GM12878 (cell line): ENCODE measurements at regions of chr21 and their contacts with region 1.

Region 1: DNA sequence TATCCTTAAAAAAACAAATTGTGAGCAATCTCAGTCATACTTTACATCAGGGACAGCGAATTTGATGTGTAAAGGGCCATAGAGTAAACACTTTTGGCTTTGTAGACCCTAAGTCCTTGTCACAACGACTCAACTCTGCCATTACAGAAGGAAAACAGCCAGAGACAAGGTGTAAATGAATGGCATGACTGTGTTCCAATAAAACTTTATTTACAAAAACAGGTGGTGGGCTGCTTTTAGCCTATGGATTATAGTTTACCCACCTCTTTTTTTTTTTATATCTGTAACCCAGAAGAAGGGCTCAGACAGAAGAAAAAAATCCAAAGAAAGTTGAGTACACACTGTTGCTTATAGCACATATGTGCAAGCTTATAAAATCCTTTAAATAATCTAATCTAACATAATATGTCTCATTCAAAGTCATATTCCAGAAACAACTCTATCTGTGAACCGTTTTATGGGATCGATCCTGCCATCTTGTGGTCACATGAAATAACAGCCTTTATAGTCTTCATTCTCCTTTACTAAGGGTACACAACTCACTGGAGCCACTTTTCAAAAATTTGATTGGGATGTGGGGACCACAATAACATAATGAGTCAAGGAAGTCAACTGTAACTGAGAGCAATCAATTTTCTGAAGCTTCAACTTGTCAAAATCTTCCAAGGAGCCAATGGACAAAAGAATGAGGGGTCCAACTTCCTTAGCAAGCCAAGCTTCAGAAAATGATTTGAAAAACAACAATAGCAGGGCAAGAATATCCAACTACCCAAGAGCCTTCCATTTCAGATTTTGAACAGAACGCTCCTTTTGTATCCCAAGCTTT is 142.2 kb upstream of the KRTAP19-8 start:
- DNase-seq: no peak
- ATAC-seq: peak; percentile 65
- H3K4me3 ChIP-seq: no peak overlapping the region
- H3K27ac ChIP-seq: no peak overlapping the region
- H3K4me1 ChIP-seq: no peaks in the 10 kb centered on the region
- H3K27me3 ChIP-seq: no peaks in the 10 kb centered on the region
- CTCF ChIP-seq: peak; percentile 21 to 52 (median 43); a peak in 5 of 6 replicates
- EP300 ChIP-seq: no peak
- POLR2A ChIP-seq: no peak
- RAD21 ChIP-seq: peak; percentile 41; the same call in 1 of the 2 replicates

Region 2: GRCh38 chr21:31098576-31099005 is 81.9 kb before region 1 on chr21:
- CTCF ChIA-PET with region 1: interaction called, 42 read pairs
- POLR2A ChIA-PET with region 1: interaction called, 4 read pairs
- RAD21 ChIA-PET with region 1: interaction called, 8 read pairs
- SMC1A ChIA-PET with region 1: interaction called, 15 read pairs
- in situ Hi-C with region 1: loop called (anchors 5 kb)
- intact Hi-C with region 1: loop called (anchors 1 kb)
- DNase-seq: no peak
- ATAC-seq: peak; percentile 91
- H3K4me3 ChIP-seq: no peak overlapping the region
- H3K27ac ChIP-seq: no peak overlapping the region
- H3K4me1 ChIP-seq: 0 out of 2 replicates have a peak, but pooled peaks cover 2% of the 10 kb centered on the region
- H3K27me3 ChIP-seq: no peaks in the 10 kb centered on the region
- CTCF ChIP-seq: peak; percentile 80 to 88 (median 80)
- EP300 ChIP-seq: no peak
- POLR2A ChIP-seq: no peak
- RAD21 ChIP-seq: peak; percentile 86

Region 3: GRCh38 chr21:31107871-31108270 is 72.6 kb before region 1 on chr21:
- CTCF ChIA-PET with region 1: interaction called, 76 read pairs
- POLR2A ChIA-PET with region 1: no interaction called
- RAD21 ChIA-PET with region 1: interaction called, 3 read pairs
- SMC1A ChIA-PET with region 1: interaction called, 40 read pairs
- in situ Hi-C with region 1: no loop called
- intact Hi-C with region 1: loop called (anchors 2 kb)
- DNase-seq: no peak
- ATAC-seq: peak; percentile 70
- H3K4me3 ChIP-seq: no peak overlapping the region
- H3K27ac ChIP-seq: no peak overlapping the region
- H3K4me1 ChIP-seq: peaks cover 11% of the 10 kb centered on the region; the same call in 1 of the 2 replicates
- H3K27me3 ChIP-seq: no peaks in the 10 kb centered on the region
- CTCF ChIP-seq: no peak
- EP300 ChIP-seq: no peak
- POLR2A ChIP-seq: no peak
- RAD21 ChIP-seq: no peak

Region 4: GRCh38 chr21:31132574-31133242 is 47.8 kb before region 1 on chr21:
- CTCF ChIA-PET with region 1: interaction called, 6 read pairs
- POLR2A ChIA-PET with region 1: no interaction called
- RAD21 ChIA-PET with region 1: no interaction called
- SMC1A ChIA-PET with region 1: interaction called, 3 read pairs
- in situ Hi-C with region 1: no loop called
- intact Hi-C with region 1: loop called (anchors 1 kb)
- DNase-seq: peak; percentile 93
- ATAC-seq: peak; percentile 85
- H3K4me3 ChIP-seq: no peak overlapping the region
- H3K27ac ChIP-seq: no peak overlapping the region
- H3K4me1 ChIP-seq: peaks cover 15% of the 10 kb centered on the region
- H3K27me3 ChIP-seq: no peaks in the 10 kb centered on the region
- CTCF ChIP-seq: no peak
- EP300 ChIP-seq: peak; percentile 23 to 82; a peak in 3 of 4 replicates
- POLR2A ChIP-seq: no peak
- RAD21 ChIP-seq: no peak

Region 5: GRCh38 chr21:31161157-31161556 is 19.3 kb before region 1 on chr21:
- CTCF ChIA-PET with region 1: interaction called, 12 read pairs
- POLR2A ChIA-PET with region 1: no interaction called
- RAD21 ChIA-PET with region 1: no interaction called
- SMC1A ChIA-PET with region 1: no interaction called
- in situ Hi-C with region 1: no loop called
- intact Hi-C with region 1: no loop called
- DNase-seq: no peak
- ATAC-seq: no peak
- H3K4me3 ChIP-seq: no peak overlapping the region
- H3K27ac ChIP-seq: no peak overlapping the region
- H3K4me1 ChIP-seq: no peaks in the 10 kb centered on the region
- H3K27me3 ChIP-seq: no peaks in the 10 kb centered on the region
- CTCF ChIP-seq: no peak
- EP300 ChIP-seq: no peak
- POLR2A ChIP-seq: no peak
- RAD21 ChIP-seq: no peak